Sciatic nerve (tissue), 2 donors: ENCODE measurements at regions of chrX and their contacts with region 1.

Region 1: DNA sequence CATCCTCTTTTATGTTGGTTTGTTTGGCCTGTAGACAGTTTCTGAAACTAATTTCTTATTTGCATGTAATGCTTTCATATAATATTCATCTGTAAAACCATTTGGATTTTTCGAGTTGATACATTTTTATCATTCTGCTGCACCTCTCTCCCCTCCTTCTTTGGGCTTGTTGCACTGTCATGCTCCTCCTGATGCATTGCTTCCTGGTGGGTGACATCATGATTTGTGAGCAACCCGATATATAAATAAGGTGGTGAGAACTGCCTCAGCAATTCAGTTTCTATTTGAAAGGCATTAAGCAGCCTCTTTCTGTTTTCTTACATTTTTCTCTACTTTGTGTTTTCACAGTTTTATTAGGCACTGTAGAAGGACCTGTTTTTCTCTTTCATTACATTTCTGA is 515.7 kb downstream of the RPA4 start:
- DNase-seq: no peak
- ATAC-seq: no peak

Region 2: DNA sequence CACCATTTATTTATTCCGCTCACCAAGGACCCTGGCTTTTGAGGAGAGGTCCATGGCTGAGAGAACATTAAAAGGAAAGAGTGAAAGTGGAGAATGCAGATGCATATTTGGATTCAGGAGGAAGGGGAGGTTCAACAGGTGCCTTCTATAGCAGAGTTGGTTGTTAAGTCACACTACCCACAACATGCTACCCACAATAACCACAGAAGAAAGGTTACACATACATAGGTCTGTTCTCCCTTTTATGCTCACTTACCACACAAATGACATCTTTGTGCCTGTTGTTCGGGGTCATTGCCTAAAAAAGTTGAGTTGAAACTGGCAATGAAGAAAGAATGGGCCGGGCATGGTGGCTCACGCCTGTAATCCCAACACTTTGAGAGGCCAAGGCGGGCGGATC is 71.7 kb after region 1 on chrX:
- intact Hi-C with region 1: loop called (anchors 2 kb)
- DNase-seq: no peak
- ATAC-seq: no peak